HepG2 (cell line): ENCODE measurements at regions of chr6 and their contacts with region 1.

Region 1: GRCh38 chr6:50602292-50602691 is 111.0 kb upstream of the TFAP2D start:
- DNase-seq: peak; percentile 41
- ATAC-seq: no peak; the same call in 2 of the 3 replicates
- H3K4me3 ChIP-seq: no peak overlapping the region
- H3K27ac ChIP-seq: no peak overlapping the region
- H3K4me1 ChIP-seq: no peaks in the 10 kb centered on the region
- H3K27me3 ChIP-seq: no peaks in the 10 kb centered on the region
- CTCF ChIP-seq: peak; percentile 64
- EP300 ChIP-seq: no peak
- POLR2A ChIP-seq: no peak
- RAD21 ChIP-seq: peak; percentile 29; the same call in 1 of the 2 replicates

Region 2: DNA sequence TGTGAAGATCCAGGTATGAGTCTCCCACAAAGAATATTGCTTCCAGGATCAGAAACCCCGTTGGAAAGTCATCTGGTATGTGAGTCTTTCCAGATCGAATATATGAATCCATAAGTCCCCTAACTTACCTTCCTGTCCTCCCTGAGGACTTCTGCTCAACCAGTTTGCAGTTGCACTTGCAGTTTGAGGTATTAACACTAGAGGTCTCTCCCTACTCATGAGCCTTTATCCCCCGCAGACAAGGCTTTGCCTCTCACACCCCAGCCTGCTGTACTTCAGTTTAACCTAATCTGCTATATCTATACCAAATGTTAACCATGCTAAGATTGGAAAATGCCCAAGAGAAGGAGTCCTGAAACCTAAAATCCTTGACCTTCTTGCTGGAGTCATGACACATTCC is 417.3 kb before region 1 on chr6:
- CTCF ChIA-PET with region 1: no interaction called
- POLR2A ChIA-PET with region 1: no interaction called
- in situ Hi-C with region 1: no loop called
- intact Hi-C with region 1: loop called (anchors 2 kb)
- DNase-seq: peak; percentile 25
- ATAC-seq: peak; percentile 75
- H3K4me3 ChIP-seq: no peak overlapping the region
- H3K27ac ChIP-seq: no peak overlapping the region
- H3K4me1 ChIP-seq: no peaks in the 10 kb centered on the region
- H3K27me3 ChIP-seq: no peaks in the 10 kb centered on the region
- CTCF ChIP-seq: peak; percentile 59
- EP300 ChIP-seq: no peak
- POLR2A ChIP-seq: no peak
- RAD21 ChIP-seq: no peak

Region 3: GRCh38 chr6:50264995-50265571 is 337.2 kb before region 1 on chr6:
- CTCF ChIA-PET with region 1: interaction called, 6 read pairs
- POLR2A ChIA-PET with region 1: no interaction called
- in situ Hi-C with region 1: loop called (anchors 10 kb)
- intact Hi-C with region 1: loop called (anchors 1 kb)
- DNase-seq: peak; percentile 9
- ATAC-seq: peak; percentile 78
- H3K4me3 ChIP-seq: no peak overlapping the region
- H3K27ac ChIP-seq: no peak overlapping the region
- H3K4me1 ChIP-seq: no peaks in the 10 kb centered on the region
- H3K27me3 ChIP-seq: no peaks in the 10 kb centered on the region
- CTCF ChIP-seq: peak; percentile 53
- EP300 ChIP-seq: no peak
- POLR2A ChIP-seq: no peak
- RAD21 ChIP-seq: no peak; the same call in 1 of the 2 replicates